Sigmoid colon (tissue), 7 donors: ENCODE measurements at regions of chr1 and their contacts with region 1.

Region 1: DNA sequence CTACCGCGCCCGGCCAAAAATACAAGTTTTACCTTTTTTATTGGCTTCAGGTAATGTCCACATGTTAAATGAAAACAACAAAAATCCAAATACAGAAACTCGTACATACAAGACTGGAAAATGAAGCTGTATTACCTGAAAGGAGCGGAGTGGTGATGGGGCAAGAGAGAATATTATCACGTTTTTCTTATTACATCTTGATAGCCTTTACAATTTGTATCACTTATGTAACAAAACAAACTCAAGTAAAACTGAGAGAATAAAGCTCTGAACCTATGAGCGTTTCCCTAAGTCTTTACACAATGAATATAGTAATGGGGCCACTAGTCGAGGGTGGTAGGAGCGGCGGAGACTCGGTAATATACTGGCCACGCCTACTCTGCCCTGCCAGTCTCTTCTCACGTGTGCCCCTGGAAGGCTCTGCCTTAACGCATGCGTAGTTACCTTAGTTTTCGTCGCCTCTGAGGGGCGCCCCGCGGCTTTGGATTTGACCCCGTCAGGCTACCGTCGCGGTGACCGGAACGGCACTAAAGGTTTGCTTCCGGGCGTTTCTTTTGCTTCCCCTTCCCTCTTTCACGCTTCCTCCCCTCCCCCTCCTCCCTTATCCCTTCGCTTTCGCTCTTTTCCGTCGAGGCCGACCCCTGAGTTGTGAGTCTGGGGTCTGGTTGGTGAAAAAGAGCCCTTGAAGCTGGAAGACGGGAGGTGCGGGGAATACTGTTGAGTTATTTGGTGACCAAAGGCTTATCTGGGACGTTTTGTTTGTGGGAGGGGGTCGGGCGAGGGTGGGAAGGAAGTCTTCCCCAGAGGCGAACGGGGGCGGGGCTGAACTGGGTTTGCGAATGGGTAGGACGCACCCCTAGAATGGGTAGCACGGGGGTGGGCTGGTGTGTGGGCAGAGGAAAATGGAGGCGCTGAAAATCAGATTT is at the start of gene SETDB1:
- DNase-seq: peak; percentile 98
- H3K4me3 ChIP-seq: peak within 1 kb of the TSS; percentile 77 to 90 (median 86)
- H3K27ac ChIP-seq: peak within 1 kb of the TSS; percentile 80 to 94 (median 88)
- H3K4me1 ChIP-seq: peaks cover 0 to 15% (median 13%) of the 10 kb centered on the region in 4 donors
- H3K27me3 ChIP-seq: no peaks in the 10 kb centered on the region
- CTCF ChIP-seq: no peak
- EP300 ChIP-seq: peak in 1 of 4 donors; percentile 74
- POLR2A ChIP-seq: no peak
- total RNA-seq, gene SETDB1: 23.9 to 36.0 (median 30.3) TPM

Region 2: DNA sequence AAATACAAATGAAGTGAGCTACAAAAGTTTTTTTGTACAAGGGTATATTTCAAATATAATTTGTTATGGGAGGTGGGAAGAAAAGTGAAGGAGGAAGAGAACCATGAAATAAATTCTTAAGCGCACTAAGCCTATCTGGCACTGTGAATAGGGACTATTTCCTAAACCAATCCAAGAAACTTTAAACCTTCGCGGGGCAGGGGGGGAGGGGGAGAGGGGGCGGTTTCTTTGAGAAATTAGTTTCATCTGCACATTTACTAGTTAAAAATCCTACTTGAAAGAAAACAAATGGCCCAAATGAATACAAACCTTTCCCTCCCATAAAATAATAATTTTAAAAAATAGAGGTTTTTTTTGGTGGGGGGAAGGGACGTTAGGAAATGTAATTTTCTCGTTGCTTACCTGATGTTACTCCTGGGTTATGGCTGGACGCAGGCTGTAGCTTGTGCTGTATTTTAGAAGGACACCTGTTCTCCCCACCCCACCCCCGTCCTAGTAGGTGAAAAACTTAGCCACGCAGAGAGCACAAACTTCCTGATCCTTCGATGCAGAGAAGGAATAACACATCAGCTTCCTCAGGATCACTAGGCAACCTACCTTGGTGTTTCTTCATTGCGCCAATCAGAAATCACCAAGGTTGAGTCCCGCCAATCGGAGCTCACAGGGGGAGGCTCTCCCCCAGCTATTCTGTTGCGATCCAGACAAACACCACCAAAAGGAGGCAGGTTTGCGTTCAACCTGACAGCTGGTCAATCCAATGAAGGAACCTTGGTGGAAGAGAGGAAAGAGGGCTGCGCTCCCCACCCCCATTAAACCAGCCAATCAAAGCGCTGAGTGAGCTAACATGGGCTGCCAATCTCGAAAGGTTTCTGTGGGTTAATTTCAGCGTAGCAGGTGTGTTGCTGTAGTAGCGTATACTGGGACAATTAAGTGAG is 229.2 kb before region 1 on chr1 and contains the start of gene GOLPH3L:
- intact Hi-C with region 1: loop called (anchors 10 kb)
- DNase-seq: peak; percentile 98
- H3K4me3 ChIP-seq: peak within 1 kb of the TSS; percentile 60 to 73 (median 64)
- H3K27ac ChIP-seq: peak within 1 kb of the TSS; percentile 79 to 80 (median 79)
- H3K4me1 ChIP-seq: peaks cover 0 to 24% (median 6%) of the 10 kb centered on the region in 4 donors
- H3K27me3 ChIP-seq: no peaks in the 10 kb centered on the region
- CTCF ChIP-seq: no peak
- EP300 ChIP-seq: no peak
- POLR2A ChIP-seq: peak in 1 of 2 donors; percentile 58
- total RNA-seq, gene GOLPH3L: 18.1 to 27.2 (median 20.7) TPM

Region 3: GRCh38 chr1:150876119-150876454 is 50.0 kb before region 1 on chr1:
- intact Hi-C with region 1: loop called (anchors 1 kb)
- DNase-seq: no peak
- H3K4me3 ChIP-seq: peak overlapping the region; percentile 71 to 100 (median 91)
- H3K27ac ChIP-seq: peak overlapping the region; percentile 92 to 100 (median 96)
- H3K4me1 ChIP-seq: peaks cover 0 to 25% (median 16%) of the 10 kb centered on the region in 4 donors
- H3K27me3 ChIP-seq: no peaks in the 10 kb centered on the region
- CTCF ChIP-seq: no peak
- EP300 ChIP-seq: no peak
- POLR2A ChIP-seq: no peak

Region 4: DNA sequence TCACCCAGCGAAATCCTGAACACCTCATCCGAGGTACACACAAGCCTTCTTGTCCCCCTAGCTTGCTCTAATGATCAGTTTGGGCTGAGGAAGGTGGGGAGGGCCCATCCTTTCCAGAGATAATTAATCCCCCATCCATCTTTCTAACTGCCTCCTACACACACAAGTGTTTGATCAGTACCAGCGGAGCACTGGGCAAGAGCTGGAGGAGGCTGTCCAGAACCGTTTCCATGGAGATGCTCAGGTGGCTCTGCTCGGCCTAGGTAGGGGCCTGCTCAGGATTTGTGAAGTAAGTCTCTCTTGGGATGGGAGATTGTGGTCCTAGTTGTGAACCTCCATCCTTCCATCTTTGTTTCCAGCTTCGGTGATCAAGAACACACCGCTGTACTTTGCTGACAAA is 61.8 kb after region 1 on chr1:
- intact Hi-C with region 1: no loop called
- DNase-seq: no peak
- H3K4me3 ChIP-seq: no peak overlapping the region
- H3K27ac ChIP-seq: no peak overlapping the region
- H3K4me1 ChIP-seq: no peaks in the 10 kb centered on the region
- H3K27me3 ChIP-seq: no peaks in the 10 kb centered on the region
- CTCF ChIP-seq: no peak
- EP300 ChIP-seq: no peak
- POLR2A ChIP-seq: no peak